ENCODE measurements at regions of chr19 and their contacts with region 1.

Region 1: DNA sequence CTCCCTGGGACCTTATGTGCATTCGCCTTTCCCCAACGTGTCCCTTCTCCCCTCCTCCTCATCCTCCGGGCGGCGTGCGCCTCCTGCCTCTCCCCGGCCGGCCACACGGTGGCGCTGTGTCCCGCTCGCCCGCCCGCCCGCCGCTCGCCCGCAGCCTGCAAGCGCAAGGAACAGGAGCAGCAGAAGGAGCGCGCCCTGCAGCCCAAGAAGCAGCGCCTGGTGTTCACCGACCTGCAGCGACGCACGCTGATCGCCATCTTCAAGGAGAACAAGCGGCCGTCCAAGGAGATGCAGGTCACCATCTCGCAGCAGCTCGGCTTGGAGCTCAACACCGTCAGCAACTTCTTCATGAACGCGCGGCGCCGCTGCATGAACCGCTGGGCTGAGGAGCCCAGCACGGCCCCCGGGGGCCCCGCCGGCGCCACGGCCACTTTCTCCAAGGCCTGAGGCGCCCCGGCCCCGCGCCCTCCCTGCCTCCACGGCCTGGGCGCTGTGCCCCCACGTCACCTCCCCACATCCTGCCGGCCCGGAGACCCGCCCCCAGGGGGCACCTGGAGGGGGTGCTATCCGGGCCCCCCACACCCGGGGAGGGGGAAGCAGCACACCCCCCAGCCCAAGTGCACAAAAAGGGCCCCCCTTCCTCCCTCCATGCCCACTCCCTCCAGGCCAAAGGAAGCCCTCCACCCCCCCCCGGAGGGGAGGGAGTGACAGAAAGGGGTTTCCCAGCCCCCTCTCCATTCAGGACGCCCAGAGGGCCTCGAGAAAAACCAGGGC is 21.9 kb downstream of the ONECUT3 start:
- DNase-seq: peak; percentile 43
- CTCF ChIP-seq: peak; percentile 45

Region 2: DNA sequence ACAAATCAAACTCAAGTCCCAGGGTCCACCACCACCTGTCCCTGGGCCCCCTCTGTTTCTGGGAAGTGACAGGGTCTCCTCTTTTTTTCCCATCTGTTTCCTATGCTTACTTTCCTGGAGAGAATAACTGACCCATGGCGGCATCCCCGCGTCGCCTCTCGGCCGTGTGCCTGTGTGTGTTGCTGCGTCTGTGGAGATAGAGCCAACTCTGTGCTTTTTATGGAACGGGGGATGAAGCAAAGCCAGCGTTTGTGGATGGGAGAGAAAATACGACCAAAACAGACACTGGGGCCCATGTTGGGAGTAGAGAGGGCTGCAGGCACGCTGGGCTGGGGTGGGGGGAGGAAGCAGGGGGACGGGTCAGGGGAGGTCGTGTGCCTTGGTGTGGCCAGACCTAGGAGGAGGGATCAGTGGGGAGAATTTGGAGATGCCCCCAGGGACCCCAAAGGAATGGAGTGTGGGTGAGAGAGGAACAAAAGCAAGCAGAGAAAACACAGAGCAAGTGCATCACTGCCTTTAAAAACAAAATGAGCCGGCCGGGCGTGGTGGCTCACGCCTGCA is 234.7 kb before region 1 on chr19:
- in situ Hi-C with region 1: loop called (anchors 10 kb)
- DNase-seq: no peak
- CTCF ChIP-seq: no peak

Region 3: DNA sequence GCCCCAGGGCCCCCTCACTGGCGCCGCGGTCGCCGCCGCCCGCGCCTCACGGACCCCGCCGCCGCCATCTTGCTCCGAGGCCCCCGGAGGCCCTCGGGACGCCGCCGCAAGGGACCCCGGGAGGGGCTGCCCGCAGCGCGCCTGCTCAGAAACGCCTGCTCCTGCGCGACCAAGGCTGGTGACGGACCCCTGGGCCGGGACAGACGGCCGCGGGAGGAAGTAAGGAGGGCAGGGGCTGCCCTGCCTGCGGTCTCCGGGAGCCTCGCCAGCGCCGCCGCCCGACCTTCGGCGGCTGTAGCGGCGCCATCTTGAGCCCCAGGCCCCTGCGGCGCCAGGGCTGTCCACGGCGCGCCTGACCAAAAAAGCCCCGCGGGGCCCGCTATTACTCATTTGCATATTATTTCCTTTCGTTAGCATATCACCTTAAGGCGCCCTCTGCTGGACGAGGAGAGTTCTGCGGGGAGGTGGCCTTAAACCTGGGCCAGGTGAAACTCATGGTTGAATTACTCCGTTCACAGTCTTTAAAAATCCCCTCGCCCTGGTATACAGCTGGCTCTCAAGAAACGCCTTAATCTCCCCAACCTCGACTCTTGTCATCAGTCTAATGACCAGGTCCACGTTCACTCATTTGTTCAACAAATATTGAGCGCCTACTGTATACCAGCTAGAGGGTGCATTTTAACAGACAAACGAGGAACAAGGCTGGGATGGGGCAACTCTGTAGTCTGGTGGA is 73.4 kb after region 1 on chr19 and contains the start of gene REXO1:
- in situ Hi-C with region 1: no loop called
- DNase-seq: peak; percentile 96
- CTCF ChIP-seq: peak; percentile 88

Measured in GM13977 (cell line).